ENCODE measurements at regions of chr5 and their contacts with region 1.

Region 1: GRCh38 chr5:77143998-77144836 is 57.1 kb upstream of the ZBED3 start:
- DNase-seq: peak; percentile 66 to 75 (median 69)
- ATAC-seq: peak; percentile 75 to 89 (median 79)
- H3K4me3 ChIP-seq: no peak overlapping the region
- H3K27ac ChIP-seq: no peak overlapping the region
- H3K4me1 ChIP-seq: peaks cover 0 to 22% (median 0%) of the 10 kb centered on the region in 12 donors
- H3K27me3 ChIP-seq: no peaks in the 10 kb centered on the region
- CTCF ChIP-seq: peak; percentile 61 to 90 (median 82)
- POLR2A ChIP-seq: no peak

Region 2: GRCh38 chr5:77210091-77210963 is 66.1 kb after region 1 on chr5 and contains the start of gene PDE8B:
- intact Hi-C with region 1: loop called in 1 of 10 experiments (anchors 10 kb)
- DNase-seq: no peak
- ATAC-seq: peak in 2 of 4 donors; percentile 62 to 68
- H3K4me3 ChIP-seq: peak within 1 kb of the TSS; percentile 33 to 80 (median 58)
- H3K27ac ChIP-seq: peak within 1 kb of the TSS in 1 of 12 donors; percentile 64
- H3K4me1 ChIP-seq: peaks cover 0 to 17% (median 7%) of the 10 kb centered on the region in 12 donors
- H3K27me3 ChIP-seq: peaks cover 5 to 49% (median 29%) of the 10 kb centered on the region in 9 donors
- CTCF ChIP-seq: no peak
- POLR2A ChIP-seq: no peak
- total RNA-seq, gene PDE8B: 2.4 to 9.3 (median 3.5) TPM

Region 3: GRCh38 chr5:77239126-77239741 is 95.0 kb after region 1 on chr5:
- intact Hi-C with region 1: loop called in 6 of 10 experiments (anchors 1 to 10 kb)
- DNase-seq: no peak
- ATAC-seq: no peak
- H3K4me3 ChIP-seq: no peak overlapping the region
- H3K27ac ChIP-seq: no peak overlapping the region
- H3K4me1 ChIP-seq: no peaks in the 10 kb centered on the region
- H3K27me3 ChIP-seq: no peaks in the 10 kb centered on the region
- CTCF ChIP-seq: peak in 7 of 12 donors; percentile 14 to 48 (median 32)
- POLR2A ChIP-seq: no peak

Region 4: DNA sequence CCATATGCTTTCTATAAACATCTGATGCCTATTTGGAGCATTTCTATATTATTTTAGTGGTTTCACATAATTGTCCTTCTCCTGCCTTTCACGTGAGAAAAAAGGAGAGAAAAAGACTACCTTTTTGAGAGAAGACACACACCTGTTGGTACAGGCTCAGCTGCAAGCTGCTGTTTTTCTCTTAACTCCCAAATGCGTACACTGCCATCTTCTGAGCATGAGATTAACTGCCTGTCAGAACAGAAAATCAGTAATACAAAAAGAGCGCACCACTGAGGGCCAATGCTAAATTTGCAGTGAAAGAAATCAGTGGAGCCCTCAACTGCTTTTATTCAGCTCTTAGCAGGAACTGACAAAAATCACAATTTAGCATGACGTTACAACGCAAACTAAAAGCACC is 293.0 kb after region 1 on chr5:
- intact Hi-C with region 1: loop called in 5 of 10 experiments (anchors 5 to 10 kb)
- DNase-seq: no peak
- ATAC-seq: no peak
- H3K4me3 ChIP-seq: no peak overlapping the region
- H3K27ac ChIP-seq: no peak overlapping the region
- H3K4me1 ChIP-seq: no peaks in the 10 kb centered on the region
- H3K27me3 ChIP-seq: no peaks in the 10 kb centered on the region
- CTCF ChIP-seq: peak in 5 of 12 donors; percentile 25 to 37 (median 29)
- POLR2A ChIP-seq: no peak

Region 5: DNA sequence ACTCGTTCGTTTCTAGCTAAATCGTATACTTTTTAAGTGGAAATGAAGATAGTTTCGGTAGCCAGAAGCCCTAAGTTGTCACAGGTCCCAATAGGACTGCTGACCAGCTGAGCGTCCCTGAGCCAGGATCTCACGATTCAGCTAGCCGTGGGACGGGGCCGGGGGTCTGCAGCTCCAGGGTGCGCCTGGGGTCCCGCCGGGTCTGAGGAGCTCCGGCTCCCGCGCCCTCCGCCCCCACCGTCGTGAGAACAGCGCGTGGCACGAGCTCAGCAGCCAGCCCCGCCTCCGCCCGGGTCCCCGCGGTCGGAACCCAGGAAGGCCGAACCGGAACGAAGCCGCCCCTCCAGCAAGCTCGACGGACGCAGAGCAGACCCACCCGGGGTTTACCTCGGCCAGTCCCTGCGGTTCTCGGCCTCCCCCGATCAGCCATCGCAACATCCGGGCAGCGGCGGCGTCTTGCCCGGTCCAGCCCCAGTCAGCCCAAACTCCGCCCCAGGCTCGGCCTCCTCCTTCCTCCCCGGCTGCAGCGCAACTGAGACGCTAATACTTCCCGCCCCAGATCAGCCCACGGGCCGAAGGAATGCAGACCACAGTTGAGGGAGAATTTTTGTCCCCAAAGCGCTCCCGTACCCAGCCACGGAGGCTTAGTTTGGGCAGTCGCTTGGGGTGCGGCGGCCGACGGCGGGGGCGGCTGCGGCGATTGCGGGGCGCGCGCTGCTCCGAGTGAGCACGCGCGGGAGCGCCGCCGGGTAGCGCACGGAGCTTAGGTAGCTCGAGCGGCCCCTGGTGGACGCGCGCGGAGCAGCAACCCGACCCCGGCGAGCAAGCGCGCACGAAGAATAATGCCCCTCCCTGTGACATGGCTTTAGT is 347.8 kb after region 1 on chr5 and contains the start of gene WDR41:
- intact Hi-C with region 1: loop called (anchors 1 to 10 kb)
- DNase-seq: peak; percentile 93 to 95 (median 95)
- ATAC-seq: peak; percentile 95 to 98 (median 98)
- H3K4me3 ChIP-seq: peak within 1 kb of the TSS; percentile 69 to 93 (median 79)
- H3K27ac ChIP-seq: peak within 1 kb of the TSS; percentile 81 to 97 (median 93)
- H3K4me1 ChIP-seq: peaks cover 0 to 16% (median 3%) of the 10 kb centered on the region in 12 donors
- H3K27me3 ChIP-seq: no peaks in the 10 kb centered on the region
- CTCF ChIP-seq: peak; percentile 88 to 99 (median 96)
- POLR2A ChIP-seq: peak in 1 of 2 donors; percentile 51
- total RNA-seq, gene WDR41: 22.2 to 50.9 (median 35.0) TPM

Region 6: DNA sequence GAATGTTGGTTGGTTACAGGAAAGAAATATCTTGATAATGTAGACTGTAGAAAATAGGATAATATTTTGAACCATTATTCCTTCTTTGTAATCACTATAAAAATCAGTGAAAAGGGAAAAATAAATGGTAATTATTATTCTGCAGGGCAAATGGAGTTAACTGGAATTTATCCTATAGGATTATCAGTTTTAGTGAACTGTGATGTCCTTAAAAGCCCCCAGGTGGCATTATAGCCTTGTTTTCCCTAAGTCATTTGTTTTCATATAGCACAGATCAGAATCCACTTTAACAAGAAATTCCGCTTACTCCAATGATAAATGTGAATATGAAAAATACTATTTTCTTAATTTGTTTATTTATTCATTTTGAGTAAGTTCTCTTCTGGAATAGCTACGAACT is 374.1 kb after region 1 on chr5:
- intact Hi-C with region 1: no loop called
- DNase-seq: no peak
- ATAC-seq: no peak
- H3K4me3 ChIP-seq: no peak overlapping the region
- H3K27ac ChIP-seq: no peak overlapping the region
- H3K4me1 ChIP-seq: no peaks in the 10 kb centered on the region
- H3K27me3 ChIP-seq: peaks cover 0 to 17% (median 0%) of the 10 kb centered on the region in 9 donors
- CTCF ChIP-seq: peak in 8 of 12 donors; percentile 9 to 37 (median 13)
- POLR2A ChIP-seq: no peak

Region 7: DNA sequence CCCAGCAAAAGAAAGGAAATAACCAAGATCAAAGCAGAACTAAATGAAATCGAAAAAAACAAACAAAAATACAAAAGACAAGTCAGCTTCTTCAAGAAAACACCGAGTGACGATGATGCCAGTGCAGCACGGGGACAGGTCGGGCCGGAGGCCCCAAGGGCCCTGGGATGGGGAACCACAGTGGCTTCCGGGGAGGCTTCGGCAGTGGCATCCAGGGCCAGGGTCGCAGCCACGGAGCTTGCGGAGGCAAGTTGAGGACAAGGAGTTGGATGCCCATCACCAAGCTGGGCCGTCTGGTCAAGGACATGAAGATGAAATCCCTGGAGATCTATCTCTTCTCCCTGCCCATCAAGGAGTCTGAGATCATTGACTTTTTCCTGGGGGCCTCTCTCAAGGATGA is 401.1 kb after region 1 on chr5:
- intact Hi-C with region 1: loop called in 1 of 10 experiments (anchors 5 kb)
- DNase-seq: no peak
- ATAC-seq: no peak
- H3K4me3 ChIP-seq: no peak overlapping the region
- H3K27ac ChIP-seq: no peak overlapping the region
- H3K4me1 ChIP-seq: no peaks in the 10 kb centered on the region
- H3K27me3 ChIP-seq: peaks cover 0 to 4% (median 0%) of the 10 kb centered on the region in 9 donors
- CTCF ChIP-seq: no peak
- POLR2A ChIP-seq: no peak

Measured in heart left ventricle (tissue), 16 donors.